ENCODE measurements at regions of chr1 and their contacts with region 1.

Region 1: GRCh38 chr1:155308493-155309422 is at the start of gene FDPS:
- DNase-seq: peak; percentile 99
- H3K4me3 Mint-ChIP-seq: peak within 1 kb of the TSS; percentile 99
- H3K27ac Mint-ChIP-seq: peak within 1 kb of the TSS; percentile 92
- H3K4me1 Mint-ChIP-seq: peaks cover 39% of the 10 kb centered on the region
- H3K27me3 Mint-ChIP-seq: no peaks in the 10 kb centered on the region
- total RNA-seq, gene FDPS: 321 and 324 TPM in 2 replicates

Region 2: DNA sequence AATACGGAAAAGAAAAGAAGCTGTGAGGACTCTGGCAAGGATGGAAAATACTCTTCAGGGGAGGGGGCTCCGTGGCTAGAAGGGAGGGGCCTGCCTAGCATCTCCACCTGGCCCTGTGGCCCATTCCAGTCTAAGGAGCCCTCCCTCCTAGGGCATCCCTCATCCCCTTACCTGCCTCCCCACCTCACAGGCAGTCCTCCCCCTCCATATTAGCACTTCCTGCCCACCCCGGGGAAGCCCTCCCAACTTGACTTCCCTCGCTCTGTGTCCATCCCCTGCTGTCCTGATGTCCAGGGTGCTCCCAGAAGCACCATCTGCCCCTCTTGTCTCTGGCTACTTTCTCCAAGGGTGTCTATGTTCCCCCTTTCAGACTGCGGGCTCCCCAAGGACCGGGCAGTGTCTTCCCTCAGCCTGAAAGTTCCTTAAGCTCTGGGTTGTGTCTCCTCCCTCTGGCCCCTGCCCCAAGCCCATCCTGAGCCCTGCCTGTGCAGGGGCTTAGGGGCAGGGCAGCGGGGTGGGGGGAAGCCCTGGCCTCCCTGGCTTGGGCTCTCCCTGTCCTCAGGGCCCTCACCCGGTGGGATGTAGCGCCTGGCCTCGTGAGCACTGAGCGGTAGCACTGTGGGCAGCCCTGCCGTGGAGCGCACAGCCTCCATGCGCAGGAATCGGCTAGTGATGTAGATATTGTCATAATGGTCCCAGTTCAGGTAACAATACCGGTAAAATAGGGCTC is 279.1 kb before region 1 on chr1:
- intact Hi-C with region 1: no loop called
- DNase-seq: no peak
- H3K4me3 Mint-ChIP-seq: no peak overlapping the region
- H3K27ac Mint-ChIP-seq: no peak overlapping the region
- H3K4me1 Mint-ChIP-seq: no peaks in the 10 kb centered on the region
- H3K27me3 Mint-ChIP-seq: peaks cover 3% of the 10 kb centered on the region

Region 3: DNA sequence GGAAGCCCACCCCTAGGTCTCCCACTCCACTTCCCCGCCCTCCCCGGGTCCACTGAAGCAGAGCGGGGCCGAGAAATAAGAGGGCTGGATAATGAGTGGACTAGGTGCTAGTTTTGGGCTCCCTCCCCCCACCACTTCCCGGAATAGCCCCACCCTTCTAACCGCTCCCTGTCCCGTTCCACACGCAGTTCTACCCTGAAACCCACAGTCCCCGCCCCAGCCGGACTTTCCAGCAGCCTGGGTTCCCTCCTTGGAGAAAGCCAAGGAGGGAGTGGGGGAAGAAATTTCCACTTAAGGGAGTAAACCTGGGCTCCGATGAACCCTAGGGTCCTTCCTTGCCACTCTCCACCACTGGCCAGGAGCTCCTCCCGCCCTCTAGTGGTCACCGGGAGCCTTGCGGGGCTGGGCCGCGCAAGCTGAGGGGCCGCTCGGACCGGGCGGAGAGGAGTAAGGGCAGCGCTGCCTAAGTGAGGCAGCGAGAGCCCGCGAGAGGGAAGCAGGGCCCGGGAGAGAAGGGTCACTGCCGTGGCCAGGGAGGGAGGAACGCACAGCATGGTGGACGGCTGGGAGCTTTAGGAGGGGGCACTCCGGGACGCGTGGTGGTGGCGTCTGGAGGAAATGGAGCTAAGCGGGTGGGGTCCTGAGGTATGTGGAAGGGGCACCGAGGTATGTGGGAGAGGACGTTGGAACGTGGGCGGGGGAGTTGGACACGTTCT is 115.3 kb before region 1 on chr1:
- intact Hi-C with region 1: loop called (anchors 5 kb)
- DNase-seq: peak; percentile 94
- H3K4me3 Mint-ChIP-seq: peak overlapping the region; percentile 97
- H3K27ac Mint-ChIP-seq: peak overlapping the region; percentile 100
- H3K4me1 Mint-ChIP-seq: peaks cover 34% of the 10 kb centered on the region
- H3K27me3 Mint-ChIP-seq: no peaks in the 10 kb centered on the region

Region 4: DNA sequence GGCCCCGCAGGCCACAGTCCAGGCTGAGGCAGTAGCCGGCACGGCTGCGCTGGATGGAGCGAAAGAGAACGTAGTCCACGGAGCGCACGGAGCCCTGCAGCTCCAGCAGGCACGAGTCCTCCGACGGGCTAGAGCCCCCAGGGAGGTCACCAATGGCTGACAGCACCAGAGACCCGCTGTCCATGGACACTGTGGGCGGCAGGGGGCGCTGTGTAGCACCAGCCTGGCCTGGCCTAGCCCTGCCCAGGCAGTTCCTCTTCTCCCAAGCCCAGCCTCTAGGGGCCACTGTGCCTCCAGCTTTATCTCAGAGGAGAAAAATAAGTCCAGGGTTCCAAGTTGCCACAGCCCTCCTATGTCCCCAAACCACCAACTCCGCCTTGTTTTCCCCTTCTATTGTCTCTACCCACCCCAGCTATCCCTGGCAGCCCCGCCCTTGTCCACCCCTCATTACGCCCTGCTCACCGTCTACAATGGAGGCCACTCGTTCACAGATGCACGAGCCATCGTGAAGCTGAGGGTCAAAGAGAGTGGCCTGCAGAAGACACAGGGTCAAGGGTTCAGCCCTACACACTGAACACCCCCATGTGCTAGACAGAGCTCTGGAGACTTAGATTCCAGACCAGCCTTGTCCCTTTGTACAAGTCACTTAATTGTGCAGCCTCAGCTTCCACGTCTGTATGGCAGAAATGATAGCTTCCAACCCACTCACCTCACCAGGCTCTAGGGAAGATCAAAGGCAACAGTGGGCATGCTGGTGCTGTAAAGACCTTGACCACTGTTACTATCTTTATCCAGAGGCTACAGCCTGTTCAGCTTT is 57.9 kb before region 1 on chr1:
- intact Hi-C with region 1: loop called (anchors 2 kb)
- DNase-seq: peak; percentile 99
- H3K4me3 Mint-ChIP-seq: peak overlapping the region; percentile 58
- H3K27ac Mint-ChIP-seq: no peak overlapping the region
- H3K4me1 Mint-ChIP-seq: peaks cover 32% of the 10 kb centered on the region
- H3K27me3 Mint-ChIP-seq: no peaks in the 10 kb centered on the region

Region 5: DNA sequence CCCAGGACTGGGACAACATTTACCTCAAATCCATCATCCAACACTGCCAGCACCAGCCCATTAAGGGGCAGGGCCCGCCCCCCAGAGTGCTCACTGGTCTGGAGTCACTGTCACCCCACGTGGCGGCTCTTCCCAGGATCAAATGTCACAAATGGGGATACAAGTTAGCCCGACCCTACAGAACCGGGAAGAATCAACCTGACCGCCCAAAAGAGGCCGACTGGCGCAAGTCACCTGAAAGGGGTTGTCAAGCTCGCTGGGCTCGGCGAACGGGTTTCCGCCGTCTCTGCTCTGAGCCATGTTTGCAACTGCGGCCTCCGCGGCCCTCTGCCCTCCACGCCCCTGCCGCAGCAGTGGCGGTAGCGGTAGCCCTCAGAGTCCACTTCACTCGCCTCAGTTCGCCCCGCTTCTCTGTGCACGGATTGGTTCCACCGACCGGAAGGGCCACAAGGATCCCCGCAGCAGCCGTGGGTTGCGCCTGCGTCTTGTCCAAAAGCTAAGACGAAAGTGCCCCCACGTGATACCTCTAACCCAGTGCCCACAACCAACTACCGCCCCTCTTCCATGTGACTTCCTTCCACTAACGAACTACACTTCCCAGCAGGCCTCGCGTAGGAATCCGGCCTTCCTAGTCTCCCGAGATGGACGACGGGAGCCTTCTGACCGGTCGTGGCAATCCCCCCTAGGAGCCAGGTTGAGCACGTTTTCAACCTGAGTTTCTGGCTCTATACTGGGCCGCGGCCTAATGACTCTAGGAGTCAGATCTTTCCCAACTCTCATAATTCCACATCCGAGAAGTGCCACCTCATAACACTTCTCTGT is 46.7 kb before region 1 on chr1 and contains the start of gene SCAMP3:
- intact Hi-C with region 1: loop called (anchors 1 kb)
- DNase-seq: peak; percentile 96
- H3K4me3 Mint-ChIP-seq: peak within 1 kb of the TSS; percentile 96
- H3K27ac Mint-ChIP-seq: peak within 1 kb of the TSS; percentile 91
- H3K4me1 Mint-ChIP-seq: peaks cover 30% of the 10 kb centered on the region
- H3K27me3 Mint-ChIP-seq: no peaks in the 10 kb centered on the region
- total RNA-seq, gene SCAMP3: 152 and 158 TPM in 2 replicates

Measured in activated CD4-positive, alpha-beta T cell treated with anti-CD3 and anti-CD28 coated beads, Interleukin-2, amount 10 ng/mL, durations not matched to agents 24 days and 14 days (primary cell).